ENCODE measurements at regions of chr1 and their contacts with region 1.

Region 1: DNA sequence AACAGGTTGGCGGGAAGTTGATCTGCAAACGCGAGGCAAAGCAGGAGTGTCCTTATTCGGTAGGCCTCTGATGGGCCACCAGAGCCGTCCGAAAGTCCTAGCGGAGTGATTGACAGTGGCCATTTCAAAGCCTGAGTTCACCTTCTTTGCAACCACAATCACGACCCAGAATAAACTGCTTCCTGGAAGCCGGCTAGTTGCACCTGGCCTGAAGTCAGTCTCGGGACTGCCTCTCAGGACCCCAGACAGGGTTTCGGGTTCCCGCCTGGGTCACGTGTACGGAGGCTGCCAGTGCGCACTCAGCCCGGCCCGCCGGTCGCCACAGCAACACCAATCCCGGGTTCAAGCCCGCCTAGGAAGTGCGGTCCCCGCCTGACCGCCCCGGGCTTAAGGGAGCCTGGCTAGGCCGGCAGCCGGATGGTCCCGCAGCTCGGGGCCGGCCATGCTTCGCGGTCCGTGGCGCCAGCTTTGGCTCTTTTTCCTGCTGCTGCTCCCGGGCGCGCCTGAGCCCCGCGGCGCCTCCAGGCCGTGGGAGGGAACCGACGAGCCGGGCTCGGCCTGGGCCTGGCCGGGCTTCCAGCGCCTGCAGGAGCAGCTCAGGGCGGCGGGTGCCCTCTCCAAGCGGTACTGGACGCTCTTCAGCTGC is at the start of gene TOR3A:
- DNase-seq: peak; percentile 96
- ATAC-seq: peak; percentile 82
- H3K4me3 ChIP-seq: peak within 1 kb of the TSS; percentile 72 to 95 (median 87)
- H3K4me3 Mint-ChIP-seq: peak within 1 kb of the TSS; percentile 98
- H3K27ac ChIP-seq: peak within 1 kb of the TSS; percentile 94 to 95
- H3K27ac Mint-ChIP-seq: peak within 1 kb of the TSS; percentile 97
- H3K4me1 ChIP-seq: peaks cover 24 to 38% of the 10 kb centered on the region in 2 donors
- H3K4me1 Mint-ChIP-seq: peaks cover 49% of the 10 kb centered on the region
- H3K27me3 ChIP-seq: no peaks in the 10 kb centered on the region
- H3K27me3 Mint-ChIP-seq: no peaks in the 10 kb centered on the region
- CTCF ChIP-seq: no peak
- total RNA-seq, gene TOR3A: 49.1 and 49.9 TPM in 2 replicates

Region 2: GRCh38 chr1:178725603-178726517 is 355.9 kb before region 1 on chr1:
- CTCF ChIA-PET with region 1: no interaction called
- POLR2A ChIA-PET with region 1: interaction called, 4 read pairs
- intact Hi-C with region 1: loop called (anchors 5 kb)
- DNase-seq: peak; percentile 89
- ATAC-seq: peak; percentile 68
- H3K4me3 ChIP-seq: peak overlapping the region; percentile 70 to 99 (median 79)
- H3K4me3 Mint-ChIP-seq: peak overlapping the region; percentile 96
- H3K27ac ChIP-seq: peak overlapping the region; percentile 78 to 90
- H3K27ac Mint-ChIP-seq: peak overlapping the region; percentile 94
- H3K4me1 ChIP-seq: peaks cover 28 to 33% of the 10 kb centered on the region in 2 donors
- H3K4me1 Mint-ChIP-seq: peaks cover 52% of the 10 kb centered on the region
- H3K27me3 ChIP-seq: no peaks in the 10 kb centered on the region
- H3K27me3 Mint-ChIP-seq: no peaks in the 10 kb centered on the region
- CTCF ChIP-seq: no peak

Region 3: GRCh38 chr1:178973666-178974101 is 108.1 kb before region 1 on chr1:
- CTCF ChIA-PET with region 1: no interaction called
- POLR2A ChIA-PET with region 1: no interaction called
- intact Hi-C with region 1: no loop called
- DNase-seq: no peak
- ATAC-seq: no peak
- H3K4me3 ChIP-seq: no peak overlapping the region
- H3K4me3 Mint-ChIP-seq: no peak overlapping the region
- H3K27ac ChIP-seq: no peak overlapping the region
- H3K27ac Mint-ChIP-seq: no peak overlapping the region
- H3K4me1 ChIP-seq: peaks cover 0 to 3% of the 10 kb centered on the region in 2 donors
- H3K4me1 Mint-ChIP-seq: no peaks in the 10 kb centered on the region
- H3K27me3 ChIP-seq: peaks cover 0 to 3% (median 2%) of the 10 kb centered on the region in 4 experiments
- H3K27me3 Mint-ChIP-seq: no peaks in the 10 kb centered on the region
- CTCF ChIP-seq: no peak

Region 4: DNA sequence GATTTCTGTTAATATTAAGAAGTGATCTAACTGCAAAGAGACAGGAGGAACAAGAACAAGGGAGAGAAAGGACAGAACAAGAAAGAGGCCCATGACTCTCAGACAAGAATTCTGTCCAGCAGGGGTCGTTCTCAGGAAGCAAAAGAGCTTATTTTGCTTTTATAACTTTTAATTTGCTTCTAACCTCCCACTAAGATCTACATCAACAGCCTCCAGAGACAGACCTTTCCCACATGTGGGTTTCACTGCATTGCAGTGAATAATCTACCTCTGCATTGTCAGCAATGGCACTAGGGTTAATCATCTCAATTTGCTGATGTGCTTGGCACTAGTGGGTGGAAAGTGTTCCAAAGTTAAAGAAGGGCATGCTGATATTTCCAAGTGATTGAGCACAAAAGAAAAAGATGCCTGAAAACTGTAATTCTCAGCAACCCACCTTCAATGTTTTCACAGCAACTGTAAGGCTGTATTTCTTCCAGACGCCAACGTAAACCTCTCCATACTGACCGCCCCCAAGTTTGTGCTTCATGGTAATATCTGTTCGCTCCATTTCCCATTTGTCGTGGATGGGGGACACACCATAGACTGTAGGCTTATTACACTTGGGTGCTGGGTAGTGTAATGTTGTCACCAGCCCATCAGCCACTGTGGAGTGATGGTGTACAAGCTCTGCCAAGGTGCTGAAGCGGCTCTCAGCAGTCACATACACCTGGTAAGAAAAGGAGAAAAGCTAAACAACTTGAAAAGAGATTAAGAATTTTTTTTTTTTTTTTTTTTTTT is 39.5 kb after region 1 on chr1:
- CTCF ChIA-PET with region 1: interaction called, 39 read pairs
- POLR2A ChIA-PET with region 1: no interaction called
- intact Hi-C with region 1: no loop called
- DNase-seq: peak; percentile 48
- ATAC-seq: no peak
- H3K4me3 ChIP-seq: no peak overlapping the region
- H3K4me3 Mint-ChIP-seq: no peak overlapping the region
- H3K27ac ChIP-seq: no peak overlapping the region
- H3K27ac Mint-ChIP-seq: peak overlapping the region; percentile 6
- H3K4me1 ChIP-seq: no peaks in the 10 kb centered on the region
- H3K4me1 Mint-ChIP-seq: peaks cover 5% of the 10 kb centered on the region
- H3K27me3 ChIP-seq: no peaks in the 10 kb centered on the region
- H3K27me3 Mint-ChIP-seq: no peaks in the 10 kb centered on the region
- CTCF ChIP-seq: peak; percentile 55

Region 5: GRCh38 chr1:179229214-179230140 is 147.7 kb after region 1 on chr1 and contains the start of gene ABL2:
- CTCF ChIA-PET with region 1: no interaction called
- POLR2A ChIA-PET with region 1: no interaction called
- intact Hi-C with region 1: loop called (anchors 5 kb)
- DNase-seq: peak; percentile 73
- ATAC-seq: peak; percentile 72
- H3K4me3 ChIP-seq: peak within 1 kb of the TSS; percentile 62 to 87 (median 85)
- H3K4me3 Mint-ChIP-seq: peak within 1 kb of the TSS; percentile 93
- H3K27ac ChIP-seq: peak within 1 kb of the TSS in 1 of 2 donors; percentile 74
- H3K27ac Mint-ChIP-seq: peak within 1 kb of the TSS; percentile 89
- H3K4me1 ChIP-seq: peaks cover 7 to 13% of the 10 kb centered on the region in 2 donors
- H3K4me1 Mint-ChIP-seq: peaks cover 29% of the 10 kb centered on the region
- H3K27me3 ChIP-seq: no peaks in the 10 kb centered on the region
- H3K27me3 Mint-ChIP-seq: no peaks in the 10 kb centered on the region
- CTCF ChIP-seq: no peak
- total RNA-seq, gene ABL2: 20.0 and 20.7 TPM in 2 replicates

Region 6: GRCh38 chr1:179447489-179447888 is 365.7 kb after region 1 on chr1:
- CTCF ChIA-PET with region 1: interaction called, 5 read pairs
- POLR2A ChIA-PET with region 1: no interaction called
- intact Hi-C with region 1: loop called (anchors 2 kb)
- DNase-seq: peak; percentile 7
- ATAC-seq: no peak
- H3K4me3 ChIP-seq: no peak overlapping the region
- H3K4me3 Mint-ChIP-seq: no peak overlapping the region
- H3K27ac ChIP-seq: no peak overlapping the region
- H3K27ac Mint-ChIP-seq: no peak overlapping the region
- H3K4me1 ChIP-seq: no peaks in the 10 kb centered on the region
- H3K4me1 Mint-ChIP-seq: no peaks in the 10 kb centered on the region
- H3K27me3 ChIP-seq: no peaks in the 10 kb centered on the region
- H3K27me3 Mint-ChIP-seq: peaks cover 6% of the 10 kb centered on the region
- CTCF ChIP-seq: no peak

Region 7: DNA sequence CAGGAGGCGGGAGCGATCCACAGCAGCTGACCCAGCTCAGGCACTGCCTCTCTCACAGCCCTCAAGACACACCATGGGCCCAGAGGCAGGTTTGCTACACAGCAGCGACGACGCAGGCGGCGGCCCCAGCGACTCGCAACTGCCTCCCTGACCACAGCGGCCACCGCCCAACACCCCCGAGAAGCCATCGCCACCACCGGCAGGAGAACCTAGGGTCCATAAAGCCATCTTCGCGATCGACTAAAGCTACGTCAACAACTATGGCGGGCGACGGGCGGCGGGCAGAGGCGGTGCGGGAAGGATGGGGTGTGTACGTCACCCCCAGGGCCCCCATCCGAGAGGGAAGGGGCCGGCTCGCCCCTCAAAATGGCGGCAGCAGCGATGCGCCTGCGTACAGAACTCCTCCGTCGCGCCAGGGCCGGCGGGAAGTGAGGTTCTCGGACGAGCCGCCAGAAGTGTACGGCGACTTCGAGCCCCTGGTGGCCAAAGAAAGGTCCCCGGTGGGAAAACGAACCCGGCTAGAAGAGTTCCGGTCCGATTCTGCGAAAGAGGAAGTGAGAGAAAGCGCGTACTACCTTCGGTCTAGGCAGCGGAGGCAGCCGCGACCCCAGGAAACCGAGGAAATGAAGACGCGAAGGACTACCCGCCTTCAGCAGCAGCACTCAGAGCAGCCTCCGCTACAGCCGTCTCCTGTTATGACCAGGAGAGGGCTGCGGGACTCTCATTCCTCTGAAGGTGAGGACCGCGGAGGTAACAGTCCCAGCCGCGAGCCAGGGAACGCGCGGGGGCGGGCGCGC is 800.6 kb after region 1 on chr1 and contains the start of gene TOR1AIP1:
- CTCF ChIA-PET with region 1: no interaction called
- POLR2A ChIA-PET with region 1: interaction called, 6 read pairs
- intact Hi-C with region 1: loop called (anchors 5 kb)
- DNase-seq: peak; percentile 100
- ATAC-seq: peak; percentile 75
- H3K4me3 ChIP-seq: peak within 1 kb of the TSS; percentile 78 to 99 (median 96)
- H3K4me3 Mint-ChIP-seq: peak within 1 kb of the TSS; percentile 99
- H3K27ac ChIP-seq: peak within 1 kb of the TSS; percentile 99 to 100
- H3K27ac Mint-ChIP-seq: peak within 1 kb of the TSS; percentile 100
- H3K4me1 ChIP-seq: peaks cover 20 to 40% of the 10 kb centered on the region in 2 donors
- H3K4me1 Mint-ChIP-seq: peaks cover 53% of the 10 kb centered on the region
- H3K27me3 ChIP-seq: no peaks in the 10 kb centered on the region
- H3K27me3 Mint-ChIP-seq: no peaks in the 10 kb centered on the region
- CTCF ChIP-seq: peak; percentile 59
- total RNA-seq, gene TOR1AIP1: 43.3 and 50.0 TPM in 2 replicates